ENCODE measurements at regions of chr1 and their contacts with region 1.

Region 1: DNA sequence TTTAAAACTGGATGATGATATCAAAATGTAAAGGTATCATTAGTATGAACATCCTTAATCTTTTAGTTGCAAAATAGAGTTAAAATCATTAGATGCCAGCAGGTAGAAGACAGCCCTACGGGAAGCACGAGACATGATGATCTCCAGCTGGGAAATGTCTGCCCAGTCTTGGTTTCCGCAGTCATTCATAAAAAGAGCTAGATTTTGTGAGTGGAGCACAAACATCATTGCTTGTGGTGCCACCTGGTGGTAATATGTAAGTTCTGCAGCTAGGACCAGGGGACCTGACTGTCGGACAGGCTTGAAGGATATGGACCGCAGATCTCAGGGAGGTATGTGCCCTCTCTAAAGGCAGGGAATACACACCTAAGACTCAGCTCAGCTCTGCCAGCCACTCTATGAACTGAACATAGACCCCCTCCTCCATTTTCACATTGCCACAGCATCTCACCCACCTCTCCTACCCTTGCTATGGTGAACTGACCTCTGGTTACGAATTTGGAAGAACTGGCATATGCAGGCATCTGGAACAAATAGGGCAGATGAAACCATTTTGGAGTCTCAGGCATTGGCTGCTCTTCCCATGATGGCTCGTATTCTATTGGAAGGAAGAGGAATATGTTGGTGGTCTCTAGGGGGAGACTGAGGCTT is 9.2 kb downstream of the FCMR start:
- DNase-seq: peak; percentile 41
- ATAC-seq: peak; percentile 55

Region 2: DNA sequence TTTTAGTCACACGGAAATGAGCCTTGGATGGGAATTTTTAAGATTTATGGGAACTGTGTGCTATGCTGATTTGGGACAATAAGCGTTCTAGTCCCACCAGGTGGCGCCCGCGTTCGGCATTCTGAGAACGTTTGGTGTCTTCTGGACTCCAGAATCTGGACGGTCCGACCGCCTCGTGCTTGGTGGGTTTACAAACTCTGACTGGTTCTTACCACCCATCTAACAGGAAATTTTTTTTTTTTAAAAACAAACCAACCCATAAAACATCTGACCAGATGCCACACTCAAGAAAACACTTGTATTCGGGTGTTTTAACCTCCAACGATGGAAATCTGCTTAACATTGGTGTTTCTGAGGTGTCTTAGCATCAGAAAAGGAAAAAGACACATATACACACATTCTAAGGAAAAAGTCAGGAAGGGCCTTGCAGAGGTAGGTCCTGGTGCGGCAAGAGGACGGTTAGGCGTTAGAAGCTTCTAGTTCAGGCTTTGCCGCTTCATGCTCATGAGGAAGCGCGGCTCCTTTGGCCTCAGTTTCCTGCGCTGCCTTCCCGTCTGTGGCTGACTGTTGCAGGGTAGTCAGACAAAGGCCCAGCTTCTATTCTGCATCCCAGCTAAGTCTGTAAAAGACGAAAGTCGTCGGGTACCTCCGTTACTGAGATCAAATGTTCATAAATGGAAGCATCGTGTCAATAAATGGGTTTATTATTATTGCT is 278.0 kb before region 1 on chr1:
- intact Hi-C with region 1: loop called (anchors 5 kb)
- DNase-seq: peak; percentile 97
- ATAC-seq: peak; percentile 72

Region 3: DNA sequence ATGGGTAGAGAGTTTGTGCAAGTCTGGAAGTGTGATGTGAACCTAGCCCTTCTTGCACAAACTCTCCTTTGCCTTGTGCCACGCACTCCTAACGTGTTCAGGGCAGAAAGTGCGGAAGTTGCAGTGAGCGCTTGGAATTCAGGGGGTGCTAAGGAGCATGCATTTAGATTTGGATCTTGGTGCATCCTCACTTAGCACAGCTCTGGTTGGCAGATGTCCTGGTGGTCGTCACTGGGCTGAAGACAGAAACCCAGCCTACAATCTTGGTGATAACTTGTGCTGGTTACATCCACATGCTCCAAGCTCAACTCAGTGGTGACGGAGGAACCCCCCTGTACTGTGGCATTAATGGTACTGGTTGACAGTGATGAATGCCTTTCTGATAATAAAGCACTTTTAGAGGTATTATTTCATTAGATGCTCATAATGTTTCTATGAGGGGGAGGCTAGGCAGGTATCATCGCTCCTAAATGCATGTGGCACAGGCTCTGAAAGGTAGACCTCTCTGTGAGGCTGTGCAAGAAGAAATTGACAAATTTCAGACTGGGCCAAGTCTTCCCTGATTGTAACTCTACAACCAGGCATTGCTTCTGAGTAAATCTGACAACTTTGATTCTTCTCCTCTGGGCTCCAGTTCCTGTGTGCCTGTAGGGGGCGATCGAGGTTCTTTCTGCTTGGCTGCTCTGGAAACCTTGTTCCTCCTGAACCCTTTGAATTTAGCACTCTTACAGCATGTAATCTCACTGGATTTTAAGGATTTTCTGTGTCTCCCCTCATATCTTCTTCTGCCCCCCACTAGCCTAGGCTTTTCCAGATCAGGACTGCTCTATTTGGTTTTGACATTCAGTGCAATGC is 187.2 kb before region 1 on chr1:
- intact Hi-C with region 1: loop called (anchors 5 kb)
- DNase-seq: no peak
- ATAC-seq: no peak

Region 4: DNA sequence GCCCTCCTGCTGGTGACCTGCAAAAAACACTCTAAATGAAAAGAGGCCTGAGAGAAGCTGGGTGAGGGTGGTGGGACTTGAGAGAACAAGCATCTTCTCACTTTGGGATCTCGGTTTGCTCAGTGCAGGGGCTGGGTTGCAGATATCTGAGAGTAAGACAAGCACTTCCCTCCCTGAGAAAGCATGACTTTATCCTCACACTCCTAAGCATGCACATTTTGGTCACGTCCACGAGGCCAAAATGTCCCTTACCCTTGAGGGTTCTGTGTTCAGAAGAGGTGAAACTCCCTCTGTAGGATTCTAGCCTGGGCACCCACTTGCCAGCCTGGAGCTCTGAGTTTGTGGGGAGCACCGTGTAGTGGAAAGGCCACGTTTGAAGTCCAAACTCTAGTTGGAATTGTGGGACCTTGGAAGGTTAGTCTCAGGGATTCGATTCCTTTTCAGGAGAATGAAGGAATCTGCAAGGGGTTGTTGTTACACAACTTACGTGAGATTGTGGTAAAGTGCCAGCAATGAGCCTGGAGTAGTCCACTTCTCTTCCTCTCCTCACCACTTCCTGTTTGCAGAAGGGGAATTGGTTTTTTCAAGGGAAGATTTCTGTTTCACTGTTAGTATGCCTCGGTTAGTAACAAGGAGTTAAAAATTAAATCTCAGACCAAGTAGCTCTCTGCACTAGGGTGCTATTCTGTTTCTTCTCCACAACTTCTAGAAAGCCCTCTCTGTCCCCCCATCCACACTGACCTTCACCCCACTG is 54.7 kb after region 1 on chr1:
- intact Hi-C with region 1: no loop called
- DNase-seq: no peak
- ATAC-seq: peak; percentile 43

Region 5: GRCh38 chr1:208245185-208245705 is 1332.7 kb after region 1 on chr1:
- intact Hi-C with region 1: no loop called
- DNase-seq: peak; percentile 91
- ATAC-seq: peak; percentile 74

Measured in left ventricle myocardium superior (tissue), 1 donor.